ENCODE measurements at regions of chr17 and their contacts with region 1.

Region 1: DNA sequence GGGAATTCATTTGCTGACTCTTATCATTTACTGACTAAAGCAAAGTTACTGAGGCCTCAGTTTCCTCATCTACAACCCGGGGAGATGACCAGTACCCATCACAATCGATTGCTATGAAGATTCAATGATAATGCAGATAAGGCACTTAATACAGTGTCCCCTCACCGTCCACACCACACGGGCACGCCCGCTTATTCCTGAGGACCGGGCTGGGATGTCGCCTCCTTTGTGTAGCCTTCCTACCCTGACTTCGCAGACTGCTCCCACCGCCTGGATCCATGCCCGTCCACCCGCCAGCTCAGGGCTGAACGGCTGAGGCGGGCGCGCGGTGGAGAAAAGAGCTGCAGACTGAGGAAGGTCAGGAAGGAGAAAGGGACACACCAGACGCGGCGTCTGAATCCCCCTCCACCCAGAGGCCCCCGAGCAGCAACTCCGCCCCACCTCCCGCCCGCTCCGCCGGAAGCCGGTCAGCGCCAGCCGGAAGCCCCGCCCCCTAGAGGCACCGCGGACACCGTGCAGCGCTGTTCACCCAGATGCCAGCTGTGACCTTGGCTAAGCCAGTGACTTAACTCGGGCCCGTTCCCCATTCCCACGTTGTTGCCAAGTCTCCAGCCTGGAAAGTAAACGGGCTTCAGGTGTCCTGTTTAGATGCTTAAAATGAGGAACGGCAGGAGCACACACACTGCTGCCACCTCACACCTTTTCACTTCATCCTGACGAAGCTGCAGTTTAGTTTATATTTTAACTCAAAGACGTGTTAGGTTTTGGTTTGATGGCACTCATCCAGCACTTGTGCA is at the start of gene KRABD2:
- DNase-seq: peak; percentile 95
- ATAC-seq: peak; percentile 99
- H3K4me3 Mint-ChIP-seq: peak within 1 kb of the TSS; percentile 81
- H3K27ac Mint-ChIP-seq: peak within 1 kb of the TSS; percentile 87
- H3K4me1 Mint-ChIP-seq: peaks cover 55% of the 10 kb centered on the region
- H3K27me3 Mint-ChIP-seq: no peaks in the 10 kb centered on the region

Region 2: GRCh38 chr17:8275421-8276290 is 100.8 kb before region 1 on chr17:
- CTCF ChIA-PET with region 1: no interaction called
- POLR2A ChIA-PET with region 1: no interaction called
- intact Hi-C with region 1: no loop called
- DNase-seq: no peak
- ATAC-seq: no peak
- H3K4me3 Mint-ChIP-seq: no peak overlapping the region
- H3K27ac Mint-ChIP-seq: no peak overlapping the region
- H3K4me1 Mint-ChIP-seq: no peaks in the 10 kb centered on the region
- H3K27me3 Mint-ChIP-seq: no peaks in the 10 kb centered on the region

Region 3: DNA sequence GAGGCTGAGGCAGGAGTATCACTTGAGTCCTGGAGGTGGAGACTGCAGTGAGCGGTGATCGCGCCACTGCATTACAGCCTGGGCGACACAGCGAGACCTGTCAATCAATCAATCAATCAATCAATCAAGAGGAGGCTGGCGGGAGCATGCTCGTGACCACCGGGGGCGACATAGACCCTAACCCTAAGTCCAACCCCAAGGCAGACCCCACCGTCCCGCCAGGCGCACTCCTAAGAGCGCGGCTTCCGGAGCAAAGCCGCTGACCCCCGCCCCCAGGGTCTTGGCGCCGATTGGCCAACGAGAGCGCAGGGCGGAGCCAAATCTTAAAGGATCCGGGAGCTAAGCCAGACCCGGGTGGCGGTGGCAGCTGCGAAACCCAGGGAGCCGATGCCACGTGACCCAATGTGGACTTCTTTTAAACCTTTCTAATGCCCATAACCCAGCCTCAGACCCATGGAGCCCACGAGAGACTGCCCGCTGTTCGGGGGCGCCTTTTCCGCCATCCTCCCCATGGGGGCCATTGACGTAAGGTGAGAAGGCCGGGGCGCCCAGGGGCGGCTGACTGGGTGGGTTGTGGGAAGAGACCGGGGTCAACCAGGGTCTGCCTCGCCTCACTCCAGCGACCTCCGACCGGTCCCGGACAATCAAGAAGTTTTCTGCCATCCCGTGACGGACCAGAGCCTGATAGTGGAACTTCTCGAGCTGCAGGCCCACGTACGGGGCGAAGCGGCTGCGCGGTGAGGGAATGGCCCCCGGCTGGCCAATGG is 88.0 kb before region 1 on chr17 and contains the start of gene RANGRF:
- CTCF ChIA-PET with region 1: interaction called, 3 read pairs
- POLR2A ChIA-PET with region 1: no interaction called
- intact Hi-C with region 1: loop called (anchors 1 to 10 kb)
- DNase-seq: peak; percentile 91
- ATAC-seq: peak; percentile 94
- H3K4me3 Mint-ChIP-seq: peak within 1 kb of the TSS; percentile 84
- H3K27ac Mint-ChIP-seq: peak within 1 kb of the TSS; percentile 93
- H3K4me1 Mint-ChIP-seq: peaks cover 20% of the 10 kb centered on the region
- H3K27me3 Mint-ChIP-seq: no peaks in the 10 kb centered on the region
- total RNA-seq, gene RANGRF: 37.9 to 40.1 TPM

Region 4: GRCh38 chr17:8294814-8295316 is 81.6 kb before region 1 on chr17:
- CTCF ChIA-PET with region 1: interaction called, 4 read pairs
- POLR2A ChIA-PET with region 1: interaction called, 5 read pairs
- intact Hi-C with region 1: loop called in 1 of 2 experiments (anchors 10 kb)
- DNase-seq: no peak
- ATAC-seq: no peak
- H3K4me3 Mint-ChIP-seq: peak overlapping the region; percentile 76
- H3K27ac Mint-ChIP-seq: peak overlapping the region; percentile 90
- H3K4me1 Mint-ChIP-seq: peaks cover 17% of the 10 kb centered on the region
- H3K27me3 Mint-ChIP-seq: no peaks in the 10 kb centered on the region

Region 5: GRCh38 chr17:8489841-8490240 is 113.4 kb after region 1 on chr17:
- CTCF ChIA-PET with region 1: no interaction called
- POLR2A ChIA-PET with region 1: no interaction called
- intact Hi-C with region 1: no loop called
- DNase-seq: no peak
- ATAC-seq: no peak
- H3K4me3 Mint-ChIP-seq: no peak overlapping the region
- H3K27ac Mint-ChIP-seq: no peak overlapping the region
- H3K4me1 Mint-ChIP-seq: no peaks in the 10 kb centered on the region
- H3K27me3 Mint-ChIP-seq: no peaks in the 10 kb centered on the region

Measured in activated CD4-positive, alpha-beta T cell treated with anti-CD3 and anti-CD28 coated beads for 36 hours (primary cell).